GM12878 (cell line): ENCODE measurements at regions of chr22 and their contacts with region 1.

Region 1: DNA sequence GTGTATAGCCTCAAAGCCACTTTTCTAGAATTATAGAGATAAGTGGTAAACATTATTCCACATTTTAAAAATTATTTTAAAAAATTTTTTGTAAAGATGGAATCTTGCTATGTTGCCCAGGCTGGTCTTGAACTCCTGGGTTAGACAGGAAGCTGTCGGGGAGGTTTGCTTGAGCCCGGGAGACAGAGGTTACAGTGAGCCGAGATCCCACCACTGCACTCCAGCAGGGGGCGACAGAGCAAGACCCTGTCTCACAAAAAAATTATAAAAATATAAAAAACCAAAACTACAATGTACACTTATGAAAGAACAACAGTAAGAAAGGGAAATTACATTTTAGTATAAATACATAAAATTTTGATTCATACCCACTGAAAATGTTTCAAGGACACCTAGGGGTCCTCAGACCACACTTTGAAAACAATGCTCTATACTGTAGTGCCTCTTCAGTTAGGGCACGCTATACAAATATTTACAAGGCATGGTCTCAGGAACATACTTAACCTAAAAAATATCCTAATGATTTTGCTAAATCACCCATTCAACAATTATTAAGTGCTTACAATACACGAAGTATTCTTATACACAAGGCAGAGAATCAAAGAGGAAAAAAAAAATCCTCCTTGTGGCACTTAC is 111.2 kb downstream of the MRTFA start:
- DNase-seq: no peak
- ATAC-seq: peak; percentile 78
- H3K4me3 ChIP-seq: no peak overlapping the region
- H3K27ac ChIP-seq: no peak overlapping the region; the same call in 1 of the 2 replicates
- H3K4me1 ChIP-seq: peaks cover 15% of the 10 kb centered on the region
- H3K27me3 ChIP-seq: no peaks in the 10 kb centered on the region
- CTCF ChIP-seq: peak; percentile 51 to 68 (median 62)
- EP300 ChIP-seq: no peak
- POLR2A ChIP-seq: no peak
- RAD21 ChIP-seq: peak; percentile 68

Region 2: GRCh38 chr22:40502919-40503318 is 22.4 kb before region 1 on chr22:
- CTCF ChIA-PET with region 1: interaction called, 9 read pairs
- POLR2A ChIA-PET with region 1: interaction called, 3 read pairs
- RAD21 ChIA-PET with region 1: interaction called, 4 read pairs
- SMC1A ChIA-PET with region 1: interaction called, 10 read pairs
- in situ Hi-C with region 1: no loop called
- intact Hi-C with region 1: no loop called
- DNase-seq: no peak
- ATAC-seq: 0 out of 3 replicates have a peak, but pooled peaks have one; percentile 9
- H3K4me3 ChIP-seq: no peak overlapping the region
- H3K27ac ChIP-seq: no peak overlapping the region
- H3K4me1 ChIP-seq: peaks cover 35% of the 10 kb centered on the region
- H3K27me3 ChIP-seq: no peaks in the 10 kb centered on the region
- CTCF ChIP-seq: no peak
- EP300 ChIP-seq: no peak
- POLR2A ChIP-seq: no peak
- RAD21 ChIP-seq: no peak

Region 3: DNA sequence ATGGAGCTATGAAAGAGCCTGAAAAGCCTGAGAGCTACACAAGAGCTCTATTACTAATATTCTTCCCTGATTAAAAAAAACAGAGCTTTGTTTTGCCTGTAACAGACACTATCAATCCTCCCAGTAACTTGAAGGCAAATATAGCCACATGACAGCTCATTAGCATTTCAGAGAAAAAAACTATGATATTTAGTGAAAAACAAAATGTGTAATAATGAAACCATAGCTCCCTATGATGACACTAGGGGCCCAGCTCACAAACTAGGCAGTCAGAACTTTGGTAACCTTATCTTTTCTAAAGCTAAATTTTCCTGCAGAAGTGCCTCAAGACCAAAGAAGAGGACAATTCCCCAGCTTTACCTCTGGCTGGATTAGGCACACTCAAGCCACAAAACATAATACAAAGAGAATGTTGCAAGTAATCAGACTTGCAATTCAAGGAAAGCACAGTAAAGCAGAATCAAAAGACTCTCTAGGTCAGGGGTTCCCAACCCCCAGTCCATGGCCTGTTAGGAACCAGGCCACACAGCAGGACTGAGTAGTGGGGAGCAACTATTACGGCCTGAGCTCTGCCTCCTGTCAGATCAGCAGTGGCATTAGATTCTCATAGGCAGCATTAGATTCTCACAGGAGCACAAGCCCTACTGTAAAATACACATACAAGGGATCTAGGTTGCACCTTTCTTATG is 57.8 kb after region 1 on chr22:
- CTCF ChIA-PET with region 1: interaction called, 26 read pairs
- POLR2A ChIA-PET with region 1: interaction called, 6 read pairs
- RAD21 ChIA-PET with region 1: interaction called, 11 read pairs
- SMC1A ChIA-PET with region 1: interaction called, 130 read pairs
- in situ Hi-C with region 1: no loop called
- intact Hi-C with region 1: no loop called
- DNase-seq: no peak
- ATAC-seq: peak; percentile 84
- H3K4me3 ChIP-seq: peak overlapping the region; percentile 12; the same call in 1 of the 2 replicates
- H3K27ac ChIP-seq: peak overlapping the region; percentile 28
- H3K4me1 ChIP-seq: peaks cover 36% of the 10 kb centered on the region
- H3K27me3 ChIP-seq: no peaks in the 10 kb centered on the region
- CTCF ChIP-seq: no peak
- EP300 ChIP-seq: no peak; a peak in 1 of 4 replicates
- POLR2A ChIP-seq: no peak
- RAD21 ChIP-seq: no peak

Region 4: DNA sequence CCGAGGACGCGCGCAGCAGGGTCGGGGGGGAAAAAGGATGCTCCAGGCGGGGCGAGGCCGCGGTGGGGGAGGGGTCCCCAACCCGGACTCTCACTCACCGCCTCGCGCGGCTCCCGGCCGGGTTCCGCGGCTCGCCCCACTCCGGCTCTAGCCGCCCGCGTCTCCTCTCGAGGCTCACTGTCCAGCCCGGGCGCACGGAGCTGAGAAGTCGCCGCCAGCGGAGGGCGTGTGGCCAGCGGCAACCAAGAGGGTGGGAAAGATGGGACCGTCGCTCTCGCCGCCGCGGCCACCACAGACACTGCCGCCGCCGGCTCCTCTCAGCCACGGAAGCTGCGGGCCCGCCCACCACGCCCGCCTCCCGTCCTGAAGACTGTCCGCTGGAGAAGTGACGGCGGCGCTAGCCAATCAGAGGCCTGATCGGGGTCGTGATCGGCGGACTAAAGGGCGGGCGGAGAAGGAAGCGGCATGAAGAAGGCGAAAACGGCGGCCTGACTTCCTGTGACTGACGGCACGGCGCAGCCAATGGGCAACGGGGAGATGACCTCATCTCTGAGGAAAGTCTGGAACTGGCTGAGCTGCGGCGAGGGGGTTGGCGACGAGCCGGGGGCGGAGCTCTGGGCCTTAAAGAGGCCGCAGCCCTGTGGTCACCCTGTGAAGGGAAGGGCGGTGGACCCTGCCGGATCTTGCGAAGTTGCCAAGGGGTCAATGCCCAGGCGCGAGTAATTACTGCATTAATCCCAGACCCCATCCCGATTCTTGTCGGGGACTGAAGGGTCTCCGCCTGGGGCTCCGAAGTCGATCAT is 111.2 kb after region 1 on chr22 and contains the start of gene MRTFA:
- CTCF ChIA-PET with region 1: interaction called, 339 read pairs
- POLR2A ChIA-PET with region 1: interaction called, 26 read pairs
- RAD21 ChIA-PET with region 1: interaction called, 137 read pairs
- SMC1A ChIA-PET with region 1: interaction called, 248 read pairs
- in situ Hi-C with region 1: loop called (anchors 5 kb)
- intact Hi-C with region 1: no loop called
- DNase-seq: peak; percentile 99
- ATAC-seq: peak; percentile 95
- H3K4me3 ChIP-seq: peak within 1 kb of the TSS; percentile 85
- H3K27ac ChIP-seq: peak within 1 kb of the TSS; percentile 79
- H3K4me1 ChIP-seq: peaks cover 6% of the 10 kb centered on the region
- H3K27me3 ChIP-seq: no peaks in the 10 kb centered on the region
- CTCF ChIP-seq: 0 out of 6 replicates have a peak, but pooled peaks of 1 of the 3 experiments have one; percentile 0
- EP300 ChIP-seq: no peak
- POLR2A ChIP-seq: peak; percentile 99
- RAD21 ChIP-seq: no peak
- polyA plus RNA-seq, gene MRTFA: 2.0 to 2.6 TPM

Region 5: GRCh38 chr22:40679964-40680818 is 154.8 kb after region 1 on chr22:
- CTCF ChIA-PET with region 1: interaction called, 10 read pairs
- POLR2A ChIA-PET with region 1: no interaction called
- RAD21 ChIA-PET with region 1: no interaction called
- SMC1A ChIA-PET with region 1: interaction called, 4 read pairs
- in situ Hi-C with region 1: no loop called
- intact Hi-C with region 1: no loop called
- DNase-seq: no peak
- ATAC-seq: no peak
- H3K4me3 ChIP-seq: no peak overlapping the region
- H3K27ac ChIP-seq: no peak overlapping the region
- H3K4me1 ChIP-seq: no peaks in the 10 kb centered on the region
- H3K27me3 ChIP-seq: peaks cover 0 to 3% of the 10 kb centered on the region in 2 experiments; a peak in 3 of 4 replicates
- CTCF ChIP-seq: no peak
- EP300 ChIP-seq: no peak
- POLR2A ChIP-seq: no peak
- RAD21 ChIP-seq: no peak

Region 6: DNA sequence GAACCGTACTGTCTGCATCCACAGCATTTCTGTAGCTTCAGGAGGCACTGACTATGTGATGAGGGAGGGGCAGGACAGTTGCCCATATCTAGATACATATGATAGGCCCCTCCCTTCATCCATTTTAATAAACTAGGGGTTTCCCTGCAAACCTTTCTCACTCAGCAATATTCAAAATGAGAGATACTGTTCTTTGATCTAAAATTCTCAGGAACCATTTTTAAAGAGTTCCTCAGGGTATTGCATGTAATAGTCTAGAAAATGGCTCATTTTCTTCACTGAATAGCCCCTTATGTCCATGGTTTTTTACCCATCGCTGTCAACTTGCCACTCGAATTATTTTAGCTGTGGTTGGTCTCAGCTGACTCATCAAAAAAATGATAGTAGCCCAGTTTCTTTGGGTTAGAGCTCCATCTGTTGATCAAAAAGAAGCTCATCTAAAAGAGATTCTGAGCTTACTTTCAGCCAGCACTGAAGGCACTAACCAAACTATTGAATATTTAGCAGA is 373.5 kb after region 1 on chr22:
- CTCF ChIA-PET with region 1: interaction called, 18 read pairs
- POLR2A ChIA-PET with region 1: interaction called, 3 read pairs
- RAD21 ChIA-PET with region 1: interaction called, 7 read pairs
- SMC1A ChIA-PET with region 1: interaction called, 11 read pairs
- in situ Hi-C with region 1: no loop called
- intact Hi-C with region 1: no loop called
- DNase-seq: peak; percentile 44
- ATAC-seq: peak; percentile 92
- H3K4me3 ChIP-seq: no peak overlapping the region
- H3K27ac ChIP-seq: no peak overlapping the region
- H3K4me1 ChIP-seq: no peaks in the 10 kb centered on the region
- H3K27me3 ChIP-seq: no peaks in the 10 kb centered on the region
- CTCF ChIP-seq: peak; percentile 48 to 68 (median 54); a peak in 5 of 6 replicates
- EP300 ChIP-seq: no peak
- POLR2A ChIP-seq: no peak
- RAD21 ChIP-seq: peak; percentile 77